ENCODE measurements at regions of chr2 and their contacts with region 1.

Region 1: DNA sequence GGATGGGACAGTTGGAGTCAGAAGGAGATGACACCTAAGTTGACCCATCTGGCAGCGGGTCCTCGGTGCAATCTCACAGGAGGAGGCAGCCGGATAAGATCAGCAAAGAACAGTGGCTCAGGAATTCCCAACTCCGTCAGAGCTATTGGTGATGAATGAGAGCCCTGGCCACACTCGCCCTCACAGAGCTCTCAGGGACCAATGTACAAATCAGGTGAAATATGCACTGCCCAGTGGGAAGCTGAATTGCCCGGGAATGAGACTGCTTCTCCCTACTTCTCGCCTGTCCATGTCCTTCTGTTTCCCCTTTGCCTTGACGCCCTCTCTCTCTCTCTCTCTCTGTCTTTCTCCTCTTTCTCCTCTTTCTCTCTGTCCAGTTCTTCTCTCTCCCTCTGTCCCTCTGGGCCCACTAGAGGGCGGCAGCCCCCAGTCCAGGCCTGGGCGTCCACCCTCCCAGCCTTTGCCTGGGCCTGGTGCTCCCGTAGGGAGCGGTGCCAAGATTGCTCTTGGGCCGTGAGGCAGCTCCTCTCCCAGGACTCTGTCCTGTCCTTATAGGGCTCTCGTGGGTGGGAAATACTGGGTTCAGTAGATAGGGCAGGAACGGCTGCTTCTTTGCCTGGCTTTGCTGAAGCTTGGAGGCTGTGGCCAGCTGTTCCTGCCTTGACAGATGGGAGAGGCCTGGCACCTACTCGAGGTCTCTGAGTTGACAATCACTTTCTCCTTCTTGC is 28.3 kb upstream of the PUM2 start:
- DNase-seq: peak; percentile 54 to 78
- ATAC-seq: peak; percentile 78 to 96
- H3K4me3 ChIP-seq: no peak overlapping the region
- H3K27ac ChIP-seq: peak overlapping the region in 1 of 4 donors; percentile 49
- H3K4me1 ChIP-seq: peaks cover 0 to 3% of the 10 kb centered on the region in 2 donors
- H3K27me3 ChIP-seq: no peaks in the 10 kb centered on the region
- CTCF ChIP-seq: peak; percentile 66 to 84 (median 72)
- POLR2A ChIP-seq: no peak

Region 2: DNA sequence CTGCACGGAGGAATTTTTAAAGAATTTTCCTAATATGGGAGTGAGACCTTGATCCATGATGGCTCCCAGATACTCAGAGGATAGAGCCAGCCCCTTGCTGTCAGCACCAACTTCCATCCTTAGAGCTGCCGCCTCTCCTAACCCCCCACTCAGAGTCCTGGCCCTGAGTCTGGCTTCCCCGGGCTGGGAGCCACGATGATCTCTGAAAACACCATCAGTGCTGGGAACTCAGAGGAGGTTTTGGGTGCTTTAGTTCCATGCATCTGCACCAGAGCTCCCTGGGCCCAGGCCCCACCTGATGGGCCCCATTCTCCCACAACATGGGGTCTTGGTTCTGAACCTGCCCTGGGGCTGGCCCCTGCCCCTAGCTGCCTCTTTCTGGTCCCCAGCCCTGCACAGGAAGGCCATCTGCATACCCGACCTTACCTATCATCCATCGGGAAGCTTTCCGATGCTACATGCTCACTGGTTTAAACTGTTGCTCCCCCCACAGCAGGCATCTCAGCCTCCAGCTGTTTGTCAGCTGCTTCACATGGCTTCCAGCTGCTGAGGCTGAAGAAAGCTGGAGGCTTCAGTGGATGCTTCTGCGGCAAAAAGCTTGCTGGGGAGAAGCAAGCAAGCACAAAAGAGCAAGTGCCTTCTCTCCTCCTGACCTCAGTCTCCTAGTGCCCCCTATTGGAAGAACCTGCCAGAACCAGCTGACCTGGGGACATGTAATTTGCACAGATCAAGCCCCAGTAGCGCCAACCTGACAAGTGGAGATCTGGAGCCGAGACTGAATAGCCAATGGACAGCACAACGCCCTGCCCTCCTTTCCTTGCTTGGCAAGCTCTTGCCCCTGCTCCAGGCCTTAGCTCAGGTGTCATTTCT is 43.7 kb after region 1 on chr2:
- in situ Hi-C with region 1: no loop called
- intact Hi-C with region 1: loop called (anchors 2 kb)
- DNase-seq: peak in 1 of 2 donors; percentile 46
- ATAC-seq: peak in 1 of 2 donors; percentile 22
- H3K4me3 ChIP-seq: no peak overlapping the region
- H3K27ac ChIP-seq: peak overlapping the region; percentile 41 to 69 (median 58)
- H3K4me1 ChIP-seq: peaks cover 26 to 28% of the 10 kb centered on the region in 2 donors
- H3K27me3 ChIP-seq: no peaks in the 10 kb centered on the region
- CTCF ChIP-seq: no peak
- POLR2A ChIP-seq: no peak

Region 3: GRCh38 chr2:20642055-20642971 is 263.4 kb after region 1 on chr2:
- in situ Hi-C with region 1: no loop called
- intact Hi-C with region 1: loop called (anchors 1 kb)
- DNase-seq: peak; percentile 56 to 75
- ATAC-seq: peak; percentile 84 to 89
- H3K4me3 ChIP-seq: no peak overlapping the region
- H3K27ac ChIP-seq: peak overlapping the region in 3 of 4 donors; percentile 29 to 52 (median 42)
- H3K4me1 ChIP-seq: peaks cover 0 to 14% of the 10 kb centered on the region in 2 donors
- H3K27me3 ChIP-seq: no peaks in the 10 kb centered on the region
- CTCF ChIP-seq: peak; percentile 88 to 99 (median 97)
- POLR2A ChIP-seq: no peak

Measured in gastrocnemius medialis (tissue), 4 donors.